ENCODE measurements at regions of chr16 and their contacts with region 1.

Region 1: DNA sequence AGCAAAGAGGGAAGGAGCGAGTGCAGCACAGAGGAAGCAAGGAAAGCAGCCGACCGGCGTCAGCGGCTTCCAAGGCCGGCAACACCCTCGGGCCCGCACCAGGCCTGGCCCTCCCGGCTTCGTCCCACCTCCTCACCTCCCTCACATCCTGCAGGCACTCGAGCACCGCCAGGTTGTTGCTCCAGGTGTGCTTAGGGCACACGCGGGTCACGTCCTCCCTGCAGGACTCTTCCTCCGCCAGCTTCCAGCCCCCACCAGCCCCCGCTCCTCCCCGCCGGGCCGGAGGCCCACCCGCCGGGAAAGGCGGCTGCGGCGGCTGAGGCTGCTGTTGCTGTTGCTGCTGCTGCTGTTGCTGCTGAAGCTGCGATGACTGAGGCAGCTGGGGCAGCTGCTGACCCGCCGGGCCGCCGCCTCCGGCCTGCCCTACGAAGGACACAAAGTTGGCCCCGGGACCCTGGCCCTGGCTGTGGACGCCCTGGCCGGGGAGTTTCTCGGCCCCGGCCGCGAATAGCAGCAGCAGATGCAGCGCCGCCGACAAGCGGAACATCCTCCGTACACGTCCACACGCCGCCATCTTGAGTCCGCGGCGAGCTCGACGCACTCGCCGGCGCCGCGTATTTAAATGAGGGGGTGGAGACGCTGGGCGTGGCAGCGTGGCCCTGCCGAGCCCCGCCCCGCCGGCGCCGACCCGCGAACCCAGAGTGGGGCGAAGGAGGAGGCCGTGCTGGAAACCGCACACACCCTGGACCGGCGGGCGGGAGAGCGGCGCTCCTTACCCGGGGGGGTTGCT is at the start of gene GLG1:
- DNase-seq: peak; percentile 82 to 96 (median 88)
- ATAC-seq: peak; percentile 88
- H3K4me3 ChIP-seq: peak within 1 kb of the TSS; percentile 92
- H3K4me3 Mint-ChIP-seq: peak within 1 kb of the TSS; percentile 95
- H3K27ac ChIP-seq: peak within 1 kb of the TSS; percentile 85 to 91
- H3K27ac Mint-ChIP-seq: peak within 1 kb of the TSS; percentile 95
- H3K4me1 ChIP-seq: peaks cover 62% of the 10 kb centered on the region
- H3K4me1 Mint-ChIP-seq: peaks cover 62% of the 10 kb centered on the region
- H3K27me3 ChIP-seq: no peaks in the 10 kb centered on the region
- H3K27me3 Mint-ChIP-seq: no peaks in the 10 kb centered on the region
- CTCF ChIP-seq: no peak
- total RNA-seq, gene GLG1: 110 to 114 TPM

Region 2: GRCh38 chr16:72664509-72665225 is 1942.0 kb before region 1 on chr16:
- CTCF ChIA-PET with region 1: no interaction called
- POLR2A ChIA-PET with region 1: no interaction called
- intact Hi-C with region 1: loop called in 1 of 2 experiments (anchors 10 kb)
- DNase-seq: peak; percentile 84 to 98 (median 90)
- ATAC-seq: peak; percentile 99
- H3K4me3 ChIP-seq: peak overlapping the region; percentile 77
- H3K4me3 Mint-ChIP-seq: peak overlapping the region; percentile 98
- H3K27ac ChIP-seq: peak overlapping the region; percentile 54 to 59
- H3K27ac Mint-ChIP-seq: peak overlapping the region; percentile 85
- H3K4me1 ChIP-seq: peaks cover 9% of the 10 kb centered on the region
- H3K4me1 Mint-ChIP-seq: peaks cover 15% of the 10 kb centered on the region
- H3K27me3 ChIP-seq: no peaks in the 10 kb centered on the region
- H3K27me3 Mint-ChIP-seq: no peaks in the 10 kb centered on the region
- CTCF ChIP-seq: no peak

Region 3: DNA sequence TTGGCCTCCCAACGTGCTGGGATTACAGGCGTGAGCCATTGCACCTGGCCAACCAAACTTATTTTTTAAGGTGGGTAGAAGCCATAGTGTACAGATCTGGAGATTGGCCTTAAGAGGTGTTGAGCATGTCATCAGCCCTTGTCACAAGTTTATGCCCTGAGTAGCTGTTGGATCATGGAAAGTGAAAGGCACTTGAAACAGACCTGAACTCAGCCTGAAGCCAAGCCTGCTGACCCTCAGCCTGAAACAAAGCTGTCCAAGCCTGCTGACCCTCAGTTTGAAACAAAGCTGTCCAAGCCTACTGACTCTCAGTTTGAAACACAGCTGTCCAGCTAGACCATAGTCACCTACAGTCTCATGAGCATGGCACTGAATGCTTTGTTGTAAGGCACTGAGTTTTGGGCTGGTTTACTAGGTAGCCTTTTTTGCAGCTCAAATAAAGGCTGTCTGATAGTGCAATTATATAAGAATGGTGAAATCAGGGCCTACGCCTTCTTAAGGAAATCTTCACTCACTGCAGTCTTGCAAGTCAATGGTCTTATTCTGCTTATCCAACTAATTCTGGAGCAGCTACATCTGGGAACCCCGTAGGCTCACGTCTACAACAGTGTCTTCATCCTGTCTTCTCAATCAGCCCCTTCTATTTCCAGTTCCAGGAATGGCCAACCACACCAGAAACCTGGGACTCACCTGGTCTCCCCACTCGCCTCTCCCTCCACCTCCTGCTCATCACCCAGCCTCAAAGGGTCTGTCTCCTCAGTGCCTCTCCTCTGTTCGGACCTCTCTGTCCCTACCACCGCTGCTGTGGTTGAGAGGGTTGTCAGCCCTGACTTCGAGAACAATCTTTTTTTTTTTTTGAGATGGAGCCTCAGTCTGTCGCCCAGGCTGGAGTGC is 233.5 kb before region 1 on chr16:
- CTCF ChIA-PET with region 1: no interaction called
- POLR2A ChIA-PET with region 1: no interaction called
- intact Hi-C with region 1: loop called in 1 of 2 experiments (anchors 10 kb)
- DNase-seq: no peak
- ATAC-seq: no peak
- H3K4me3 ChIP-seq: no peak overlapping the region
- H3K4me3 Mint-ChIP-seq: no peak overlapping the region
- H3K27ac ChIP-seq: no peak overlapping the region
- H3K27ac Mint-ChIP-seq: peak overlapping the region; percentile 69
- H3K4me1 ChIP-seq: peaks cover 7% of the 10 kb centered on the region
- H3K4me1 Mint-ChIP-seq: peaks cover 8% of the 10 kb centered on the region
- H3K27me3 ChIP-seq: no peaks in the 10 kb centered on the region
- H3K27me3 Mint-ChIP-seq: no peaks in the 10 kb centered on the region
- CTCF ChIP-seq: no peak

Region 4: DNA sequence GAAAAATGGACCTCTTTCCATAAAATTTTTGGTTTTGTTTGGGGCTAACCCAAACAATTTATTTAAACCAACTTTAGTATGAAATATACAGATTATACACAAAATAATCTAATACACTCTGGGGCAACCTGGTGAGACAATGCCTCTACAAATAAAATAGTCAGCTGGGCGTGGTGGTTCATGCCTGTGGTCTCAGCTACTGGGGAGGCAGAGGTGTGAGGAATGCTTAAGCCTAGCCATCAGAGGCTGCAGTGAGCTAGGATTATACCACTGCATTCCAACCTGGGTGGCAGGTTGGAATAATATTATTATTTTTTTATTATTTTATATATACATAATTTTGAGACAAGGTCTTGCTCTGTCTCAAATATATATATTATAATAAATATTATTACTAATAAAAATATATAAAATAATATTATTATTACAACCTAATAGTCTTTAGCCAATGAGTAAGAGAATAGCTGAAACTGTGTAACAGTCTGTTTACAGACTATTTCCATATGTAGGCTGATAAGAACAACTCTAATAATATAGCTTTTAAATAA is 50.3 kb before region 1 on chr16:
- CTCF ChIA-PET with region 1: no interaction called
- POLR2A ChIA-PET with region 1: interaction called, 10 read pairs
- intact Hi-C with region 1: no loop called
- DNase-seq: no peak
- ATAC-seq: no peak
- H3K4me3 ChIP-seq: no peak overlapping the region
- H3K4me3 Mint-ChIP-seq: no peak overlapping the region
- H3K27ac ChIP-seq: no peak overlapping the region
- H3K27ac Mint-ChIP-seq: peak overlapping the region; percentile 39
- H3K4me1 ChIP-seq: peaks cover 18% of the 10 kb centered on the region
- H3K4me1 Mint-ChIP-seq: peaks cover 56% of the 10 kb centered on the region
- H3K27me3 ChIP-seq: no peaks in the 10 kb centered on the region
- H3K27me3 Mint-ChIP-seq: no peaks in the 10 kb centered on the region
- CTCF ChIP-seq: no peak

Region 5: GRCh38 chr16:74568961-74569631 is 37.6 kb before region 1 on chr16:
- CTCF ChIA-PET with region 1: no interaction called
- POLR2A ChIA-PET with region 1: interaction called, 12 read pairs
- intact Hi-C with region 1: loop called (anchors 2 kb)
- DNase-seq: no peak
- ATAC-seq: no peak
- H3K4me3 ChIP-seq: no peak overlapping the region
- H3K4me3 Mint-ChIP-seq: no peak overlapping the region
- H3K27ac ChIP-seq: no peak overlapping the region
- H3K27ac Mint-ChIP-seq: peak overlapping the region; percentile 54
- H3K4me1 ChIP-seq: peaks cover 59% of the 10 kb centered on the region
- H3K4me1 Mint-ChIP-seq: peaks cover 90% of the 10 kb centered on the region
- H3K27me3 ChIP-seq: no peaks in the 10 kb centered on the region
- H3K27me3 Mint-ChIP-seq: no peaks in the 10 kb centered on the region
- CTCF ChIP-seq: no peak

Region 6: DNA sequence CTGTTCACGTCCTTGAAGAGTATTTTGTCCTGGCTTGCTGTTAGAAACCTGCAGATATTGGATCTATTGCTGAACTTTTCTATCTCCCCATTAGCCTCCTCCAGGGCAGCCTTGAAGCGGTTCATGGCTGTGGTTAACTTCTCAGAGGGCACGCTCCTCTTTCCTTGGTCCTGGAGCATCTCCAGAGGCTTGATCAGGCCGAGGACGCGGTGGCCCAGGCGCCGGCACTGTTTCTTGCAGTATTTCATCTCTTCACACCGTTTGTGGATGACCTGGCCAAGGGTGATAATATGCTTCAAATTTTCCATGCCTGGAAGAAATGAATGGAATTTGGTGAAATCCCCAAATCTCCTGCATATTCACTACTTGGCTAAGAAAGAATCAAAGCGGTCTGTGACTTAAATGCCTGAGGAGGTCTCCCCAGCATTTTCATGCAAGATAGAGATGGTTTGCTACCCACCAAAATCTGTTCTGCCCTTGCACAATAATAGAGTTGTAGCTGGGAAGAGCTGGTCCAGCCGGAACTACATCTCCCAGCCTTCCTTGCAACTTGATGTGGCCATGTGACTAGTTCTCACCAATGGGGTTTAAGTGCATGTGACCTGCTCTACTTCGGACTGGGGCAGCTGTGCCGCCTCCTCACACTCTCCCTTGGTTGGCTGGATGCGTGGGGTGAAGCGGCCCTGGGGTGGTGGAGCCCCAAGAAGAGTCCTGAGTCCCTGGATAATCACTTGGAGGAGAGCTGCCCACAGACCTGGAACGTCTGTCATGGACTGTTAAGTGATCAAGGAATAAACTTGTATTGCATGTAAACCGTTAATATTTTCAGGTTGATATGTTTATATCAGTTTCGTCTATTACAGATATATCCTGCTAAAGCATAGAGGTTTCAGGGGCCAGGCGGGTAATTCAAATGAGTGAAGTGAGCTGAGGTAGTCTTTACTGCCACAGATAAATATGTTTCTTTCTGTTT is 89.0 kb after region 1 on chr16:
- CTCF ChIA-PET with region 1: no interaction called
- POLR2A ChIA-PET with region 1: interaction called, 10 read pairs
- intact Hi-C with region 1: no loop called
- DNase-seq: peak; percentile 24 to 89 (median 42)
- ATAC-seq: peak; percentile 73
- H3K4me3 ChIP-seq: peak overlapping the region; percentile 39
- H3K4me3 Mint-ChIP-seq: peak overlapping the region; percentile 89
- H3K27ac ChIP-seq: no peak overlapping the region
- H3K27ac Mint-ChIP-seq: peak overlapping the region; percentile 75
- H3K4me1 ChIP-seq: peaks cover 44% of the 10 kb centered on the region
- H3K4me1 Mint-ChIP-seq: peaks cover 71% of the 10 kb centered on the region
- H3K27me3 ChIP-seq: no peaks in the 10 kb centered on the region
- H3K27me3 Mint-ChIP-seq: no peaks in the 10 kb centered on the region
- CTCF ChIP-seq: no peak